Activated T-helper 2 cell treated with anti-CD3 and anti-CD28 coated beads, Interferon-gamma antibody, Interleukin-2, Interleukin-4, amounts not matched to agents 10 μg/mL and 5 μg/mL and 100 μg/mL, durations not matched to agents 14 hours and 24 hours and 36 hours (primary cell): ENCODE measurements at regions of chr2 and their contacts with region 1.

Region 1: DNA sequence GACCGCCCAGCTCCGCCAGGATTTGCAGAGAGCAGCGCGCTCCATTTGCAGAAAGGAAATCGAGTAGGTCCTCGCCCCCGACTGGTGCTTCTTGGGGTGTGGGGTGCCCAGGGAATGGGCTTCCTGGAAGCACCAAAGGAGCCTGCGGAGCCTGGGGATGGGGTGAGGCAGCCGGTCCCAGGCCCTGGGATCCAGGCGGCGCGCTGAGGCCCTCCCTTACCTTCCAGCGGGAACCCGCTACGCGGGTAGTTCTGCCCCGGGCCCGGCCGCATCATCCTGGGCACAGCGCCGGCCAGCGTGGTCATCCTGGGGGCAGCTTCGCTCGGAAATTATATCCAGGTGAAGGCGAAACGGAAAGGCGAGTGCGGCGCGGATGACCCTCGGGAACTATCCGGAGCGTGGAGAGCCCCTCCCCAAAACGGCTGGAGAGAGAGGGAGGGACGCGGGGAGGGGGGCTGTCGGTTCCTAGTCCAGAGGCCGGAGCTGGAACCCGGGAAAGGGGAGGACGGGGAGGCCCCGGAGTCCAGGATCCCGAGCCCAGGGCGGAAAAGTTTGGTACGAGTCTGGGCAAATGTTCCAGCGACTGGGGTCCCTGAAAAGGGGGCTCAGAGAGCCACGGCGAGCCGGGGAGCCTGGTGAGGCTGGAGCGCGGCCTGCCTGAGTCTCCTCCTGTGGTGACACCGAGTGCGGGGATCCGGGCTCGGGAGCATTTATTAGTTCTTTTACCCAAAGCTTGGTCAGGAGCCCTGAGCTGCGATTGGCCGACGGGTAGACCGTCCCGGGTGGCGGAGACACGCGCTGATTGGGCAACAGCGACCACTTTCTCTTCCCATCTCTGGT is at the start of gene PAX3:
- DNase-seq: no peak
- H3K4me3 Mint-ChIP-seq: no peak within 1 kb of the TSS
- H3K27ac Mint-ChIP-seq: peak within 1 kb of the TSS; percentile 2
- H3K4me1 Mint-ChIP-seq: peaks cover 28% of the 10 kb centered on the region
- H3K27me3 Mint-ChIP-seq: peaks cover 95% of the 10 kb centered on the region
- total RNA-seq, gene PAX3: not detected in 2 replicates

Region 2: DNA sequence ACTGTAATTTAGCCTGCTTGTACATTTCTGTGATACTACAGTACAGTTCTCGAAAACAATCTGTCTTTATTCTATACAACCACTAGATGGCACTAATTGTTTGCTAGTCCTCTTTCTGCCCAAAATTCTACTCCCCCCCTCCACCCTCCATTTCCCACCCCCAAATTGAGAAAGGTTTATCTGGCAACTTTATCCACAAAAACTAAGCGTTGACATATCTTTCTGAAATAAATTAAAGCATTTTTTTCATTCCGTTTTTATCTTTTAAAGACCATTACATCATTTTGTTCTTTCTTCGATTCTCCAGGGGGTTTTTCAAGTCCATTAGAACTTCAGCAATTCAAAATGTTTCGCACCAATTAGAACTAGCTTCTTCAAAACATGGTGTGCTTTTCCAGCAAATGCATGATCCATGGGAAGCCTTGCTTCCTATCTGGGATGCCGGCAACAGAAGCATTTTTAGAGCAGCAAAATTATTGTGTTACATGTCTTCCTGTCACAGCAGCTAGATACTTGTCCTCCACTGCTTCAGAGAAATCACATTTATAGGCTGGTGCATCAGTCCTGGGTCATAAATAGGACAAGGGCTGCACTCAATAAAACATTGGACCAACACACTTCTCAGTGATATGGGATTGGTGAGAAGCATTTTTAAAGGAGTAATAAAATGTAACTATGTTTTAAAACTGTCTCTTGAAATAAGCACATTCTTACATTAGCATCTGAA is 241.0 kb before region 1 on chr2:
- intact Hi-C with region 1: loop called (anchors 5 kb)
- DNase-seq: no peak
- H3K4me3 Mint-ChIP-seq: no peak overlapping the region
- H3K27ac Mint-ChIP-seq: no peak overlapping the region
- H3K4me1 Mint-ChIP-seq: no peaks in the 10 kb centered on the region
- H3K27me3 Mint-ChIP-seq: peaks cover 14% of the 10 kb centered on the region

Region 3: DNA sequence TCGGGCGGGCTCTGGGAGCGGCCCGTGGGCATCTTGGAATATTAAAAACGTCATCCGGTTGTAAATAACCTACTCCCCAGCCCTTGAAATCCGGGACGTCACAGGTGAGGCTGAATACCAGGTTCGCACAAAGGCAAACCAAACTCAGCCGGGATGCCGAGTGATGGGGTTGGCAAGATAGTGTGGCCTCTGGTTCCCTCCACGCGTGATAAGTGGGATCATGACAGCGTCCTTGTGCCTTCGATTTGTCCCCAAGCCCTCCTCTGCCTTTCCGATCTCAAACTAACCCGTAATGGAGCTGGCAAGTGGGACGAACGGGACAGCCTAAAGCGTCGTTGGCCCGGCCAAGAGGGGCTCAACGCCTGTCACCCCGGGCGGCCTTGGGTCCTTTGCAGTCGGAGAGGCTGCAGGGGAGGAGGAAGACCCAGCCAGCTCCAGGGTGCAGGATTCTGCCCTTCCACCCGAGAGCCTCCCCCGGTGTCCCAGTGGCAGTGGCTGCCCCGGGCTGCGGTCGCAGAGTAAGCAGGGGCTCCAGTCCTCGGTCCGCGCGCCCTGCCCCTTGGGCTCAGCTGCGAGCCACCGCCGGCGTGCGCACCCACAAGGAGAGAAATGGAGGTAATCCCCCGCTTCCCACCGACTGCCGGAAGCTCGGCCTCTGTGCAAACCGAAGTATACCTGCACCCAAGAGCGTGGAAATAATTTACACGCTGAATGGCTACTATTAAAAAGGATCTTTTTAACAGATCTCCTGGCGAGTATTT is 13.6 kb after region 1 on chr2:
- intact Hi-C with region 1: loop called (anchors 2 kb)
- DNase-seq: no peak
- H3K4me3 Mint-ChIP-seq: no peak overlapping the region
- H3K27ac Mint-ChIP-seq: peak overlapping the region; percentile 40
- H3K4me1 Mint-ChIP-seq: peaks cover 3% of the 10 kb centered on the region
- H3K27me3 Mint-ChIP-seq: peaks cover 94% of the 10 kb centered on the region